IMR-90 (cell line): ENCODE measurements at regions of chr6 and their contacts with region 1.

Region 1: DNA sequence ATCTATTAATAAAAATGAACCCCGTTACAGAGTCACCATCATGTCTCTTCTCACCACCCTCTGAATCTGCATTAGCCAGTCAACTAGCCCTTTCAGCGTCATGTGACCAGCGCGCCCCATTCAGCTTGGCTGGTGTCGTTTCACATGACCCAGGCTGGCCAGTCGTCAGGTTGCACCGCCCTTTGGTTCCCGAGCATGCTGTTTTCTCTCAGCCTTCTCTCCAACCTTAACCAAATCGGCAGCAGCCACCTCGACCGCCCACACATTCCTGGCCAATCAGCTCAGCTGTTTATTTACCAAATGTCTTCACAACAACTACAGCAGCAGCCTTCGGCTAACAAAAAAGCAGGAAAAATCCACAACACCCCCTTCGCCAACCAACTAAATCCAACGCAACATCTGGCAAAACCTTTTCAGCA is 5.6 kb downstream of the SRSF3 start:
- DNase-seq: peak; percentile 40
- ATAC-seq: peak; percentile 10; the same call in 1 of the 2 replicates
- H3K4me3 ChIP-seq: no peak overlapping the region
- H3K27ac ChIP-seq: no peak overlapping the region
- H3K4me1 ChIP-seq: peaks cover 10% of the 10 kb centered on the region
- H3K27me3 ChIP-seq: no peaks in the 10 kb centered on the region
- CTCF ChIP-seq: no peak
- POLR2A ChIP-seq: no peak
- RAD21 ChIP-seq: no peak

Region 2: DNA sequence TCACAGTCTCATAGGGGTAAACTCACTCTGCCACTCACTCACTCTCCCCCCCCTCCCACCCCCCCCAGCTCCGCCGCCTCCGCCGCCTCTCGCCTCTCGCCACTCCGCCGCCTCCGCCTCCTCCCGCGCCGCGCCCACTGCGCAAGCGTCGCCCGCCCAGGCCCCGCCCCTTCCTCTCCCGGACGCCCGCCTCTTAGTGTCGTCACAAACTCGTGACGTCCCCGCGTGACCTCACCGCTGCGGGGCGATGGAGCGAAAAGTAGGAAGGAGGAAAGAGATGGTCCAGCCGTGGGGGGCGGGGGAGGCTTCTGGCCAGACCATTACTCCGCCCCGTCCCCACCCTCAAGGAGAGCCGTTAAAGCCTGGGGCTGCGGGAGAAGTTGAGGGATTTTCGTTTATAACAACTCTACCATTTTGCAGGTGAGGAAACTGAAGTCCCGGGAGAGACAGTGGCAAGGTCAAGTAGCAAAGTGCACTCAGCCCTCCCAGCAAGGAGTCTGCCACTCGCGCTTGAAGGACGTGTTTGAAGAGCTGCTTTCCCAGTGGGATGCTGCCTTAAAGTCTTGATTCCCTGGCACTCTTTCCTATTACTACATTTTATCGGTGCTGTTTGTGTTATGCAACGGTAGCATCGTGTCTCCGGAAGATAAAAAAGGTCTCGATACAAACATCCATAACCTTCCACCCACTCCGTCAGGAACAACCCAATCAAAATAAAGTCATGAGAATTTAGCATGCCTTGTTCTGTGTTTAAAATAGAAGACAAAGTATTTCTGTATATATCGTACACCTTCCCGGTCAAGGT is 1902.9 kb before region 1 on chr6 and contains the start of gene ILRUN:
- CTCF ChIA-PET with region 1: no interaction called
- POLR2A ChIA-PET with region 1: interaction called, 12 read pairs
- dilution Hi-C with region 1: no loop called
- in situ Hi-C with region 1: no loop called
- intact Hi-C with region 1: no loop called
- DNase-seq: peak; percentile 92
- ATAC-seq: peak; percentile 97
- H3K4me3 ChIP-seq: peak within 1 kb of the TSS; percentile 89
- H3K27ac ChIP-seq: peak within 1 kb of the TSS; percentile 95
- H3K4me1 ChIP-seq: peaks cover 4% of the 10 kb centered on the region; the same call in 1 of the 2 replicates
- H3K27me3 ChIP-seq: no peaks in the 10 kb centered on the region
- CTCF ChIP-seq: no peak
- POLR2A ChIP-seq: no peak
- RAD21 ChIP-seq: no peak
- total RNA-seq, gene ILRUN: 29.9 and 32.2 TPM in 2 replicates

Region 3: DNA sequence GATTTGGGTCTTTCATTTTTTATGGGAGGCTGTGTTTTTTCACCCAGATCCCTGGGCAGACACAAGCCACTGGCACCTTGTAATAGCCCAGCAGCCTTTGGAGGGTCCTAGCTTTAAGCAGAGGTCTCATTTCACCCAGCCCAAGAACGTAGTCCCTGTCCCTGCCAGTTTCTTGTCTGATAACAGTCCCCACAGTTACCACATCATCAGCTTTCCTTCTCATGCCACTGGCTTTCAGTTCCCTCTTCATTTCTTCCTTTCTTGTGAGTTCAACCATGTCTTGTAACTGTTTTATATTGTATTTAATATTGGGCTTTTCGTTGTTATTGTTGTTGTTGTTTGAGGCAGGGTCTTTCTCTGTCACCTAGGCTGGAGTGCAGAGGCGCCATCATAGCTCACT is 319.3 kb before region 1 on chr6:
- CTCF ChIA-PET with region 1: no interaction called
- POLR2A ChIA-PET with region 1: no interaction called
- dilution Hi-C with region 1: no loop called
- in situ Hi-C with region 1: no loop called
- intact Hi-C with region 1: no loop called
- DNase-seq: no peak
- ATAC-seq: no peak
- H3K4me3 ChIP-seq: no peak overlapping the region
- H3K27ac ChIP-seq: no peak overlapping the region
- H3K4me1 ChIP-seq: no peaks in the 10 kb centered on the region
- H3K27me3 ChIP-seq: peaks cover 73% of the 10 kb centered on the region
- CTCF ChIP-seq: no peak
- POLR2A ChIP-seq: no peak
- RAD21 ChIP-seq: no peak

Region 4: GRCh38 chr6:36546920-36547645 is 52.7 kb before region 1 on chr6 and contains the start of gene STK38:
- CTCF ChIA-PET with region 1: no interaction called
- POLR2A ChIA-PET with region 1: interaction called, 10 read pairs
- dilution Hi-C with region 1: no loop called
- in situ Hi-C with region 1: loop called (anchors 5 kb)
- intact Hi-C with region 1: loop called (anchors 1 kb)
- DNase-seq: peak; percentile 82
- ATAC-seq: peak; percentile 95
- H3K4me3 ChIP-seq: peak within 1 kb of the TSS; percentile 97
- H3K27ac ChIP-seq: peak within 1 kb of the TSS; percentile 98
- H3K4me1 ChIP-seq: peaks cover 6% of the 10 kb centered on the region; the same call in 1 of the 2 replicates
- H3K27me3 ChIP-seq: no peaks in the 10 kb centered on the region
- CTCF ChIP-seq: no peak
- POLR2A ChIP-seq: peak; percentile 58
- RAD21 ChIP-seq: no peak
- total RNA-seq, gene STK38: 9.7 and 10.6 TPM in 2 replicates

Region 5: DNA sequence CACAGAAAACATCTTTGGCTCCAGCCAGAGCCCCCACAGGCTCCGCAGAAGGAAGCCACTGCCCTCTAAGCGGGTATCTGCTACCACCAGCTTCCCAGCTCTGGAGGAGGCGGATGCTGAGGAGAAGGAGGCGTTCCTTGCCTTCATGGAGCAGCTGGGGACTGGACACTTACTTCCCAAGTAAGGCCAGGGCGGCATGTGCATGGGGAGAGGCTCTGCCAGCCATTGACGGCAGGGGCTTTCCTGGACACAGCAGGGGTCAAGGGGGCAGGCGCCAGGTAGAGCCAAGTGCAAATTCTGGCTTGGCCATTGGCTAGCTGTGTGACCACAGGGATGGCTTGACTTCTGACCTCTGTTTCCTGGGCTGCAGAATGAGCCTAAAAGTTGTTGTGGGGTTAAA is 115.7 kb after region 1 on chr6:
- CTCF ChIA-PET with region 1: no interaction called
- POLR2A ChIA-PET with region 1: interaction called, 10 read pairs
- dilution Hi-C with region 1: no loop called
- in situ Hi-C with region 1: no loop called
- intact Hi-C with region 1: no loop called
- DNase-seq: no peak
- ATAC-seq: no peak
- H3K4me3 ChIP-seq: no peak overlapping the region
- H3K27ac ChIP-seq: no peak overlapping the region
- H3K4me1 ChIP-seq: no peaks in the 10 kb centered on the region
- H3K27me3 ChIP-seq: peaks cover 46% of the 10 kb centered on the region
- CTCF ChIP-seq: no peak
- POLR2A ChIP-seq: no peak
- RAD21 ChIP-seq: no peak

Region 6: GRCh38 chr6:36955671-36956445 is 356.1 kb after region 1 on chr6:
- CTCF ChIA-PET with region 1: no interaction called
- POLR2A ChIA-PET with region 1: no interaction called
- dilution Hi-C with region 1: no loop called
- in situ Hi-C with region 1: no loop called
- intact Hi-C with region 1: no loop called
- DNase-seq: no peak
- ATAC-seq: no peak
- H3K4me3 ChIP-seq: no peak overlapping the region
- H3K27ac ChIP-seq: no peak overlapping the region
- H3K4me1 ChIP-seq: peaks cover 3% of the 10 kb centered on the region
- H3K27me3 ChIP-seq: peaks cover 3% of the 10 kb centered on the region; the same call in 1 of the 2 replicates
- CTCF ChIP-seq: no peak
- POLR2A ChIP-seq: no peak
- RAD21 ChIP-seq: no peak